ENCODE measurements at regions of chr6 and their contacts with region 1.

Region 1: GRCh38 chr6:53484476-53485280 is 60.2 kb downstream of the GCLC start:
- DNase-seq: peak; percentile 44 to 87
- ATAC-seq: peak; percentile 53

Region 2: DNA sequence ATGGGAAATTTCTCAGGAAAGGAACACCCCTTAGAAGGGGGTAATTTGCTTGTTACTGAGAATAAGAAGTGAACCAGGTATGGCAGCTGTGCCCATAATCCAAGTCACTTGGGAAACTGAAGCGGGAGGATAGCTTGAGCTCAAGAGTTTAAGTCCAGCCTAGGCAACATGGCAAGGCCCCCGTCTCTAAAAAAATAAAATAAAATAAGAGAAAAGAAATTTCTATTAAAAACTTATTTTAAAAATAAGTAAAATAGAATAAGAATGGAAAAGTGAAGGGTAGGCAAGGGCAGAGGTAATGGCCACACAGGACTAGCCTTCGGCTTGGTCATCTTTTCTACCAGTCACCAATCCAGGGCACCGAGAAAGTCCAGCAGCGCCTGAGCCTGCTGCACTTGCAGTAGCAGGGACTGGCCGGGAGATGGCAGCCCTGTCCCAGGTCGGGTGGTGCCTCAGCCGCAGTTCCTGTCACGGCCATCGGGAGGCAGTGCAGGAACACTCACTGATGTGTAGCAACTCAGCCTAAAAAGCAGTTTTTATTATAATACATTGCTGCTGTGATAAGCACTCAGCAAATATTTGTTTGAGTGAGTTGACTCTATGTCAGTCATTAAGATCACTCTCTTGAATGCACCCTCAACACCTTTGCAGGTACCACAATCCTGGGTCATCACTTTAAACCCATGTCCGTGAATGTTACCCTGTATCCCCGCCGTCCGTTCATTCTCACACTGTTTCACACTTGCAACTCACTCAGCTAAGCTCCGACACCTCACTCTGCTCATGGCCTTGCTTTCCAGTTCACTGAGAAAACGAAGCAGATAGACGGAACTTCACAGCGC is 312.9 kb before region 1 on chr6:
- intact Hi-C with region 1: loop called (anchors 2 to 5 kb)
- DNase-seq: peak; percentile 71 to 89
- ATAC-seq: peak; percentile 97

Measured in left colon (tissue), 2 donors.